ENCODE measurements at regions of chr7 and their contacts with region 1.

Region 1: DNA sequence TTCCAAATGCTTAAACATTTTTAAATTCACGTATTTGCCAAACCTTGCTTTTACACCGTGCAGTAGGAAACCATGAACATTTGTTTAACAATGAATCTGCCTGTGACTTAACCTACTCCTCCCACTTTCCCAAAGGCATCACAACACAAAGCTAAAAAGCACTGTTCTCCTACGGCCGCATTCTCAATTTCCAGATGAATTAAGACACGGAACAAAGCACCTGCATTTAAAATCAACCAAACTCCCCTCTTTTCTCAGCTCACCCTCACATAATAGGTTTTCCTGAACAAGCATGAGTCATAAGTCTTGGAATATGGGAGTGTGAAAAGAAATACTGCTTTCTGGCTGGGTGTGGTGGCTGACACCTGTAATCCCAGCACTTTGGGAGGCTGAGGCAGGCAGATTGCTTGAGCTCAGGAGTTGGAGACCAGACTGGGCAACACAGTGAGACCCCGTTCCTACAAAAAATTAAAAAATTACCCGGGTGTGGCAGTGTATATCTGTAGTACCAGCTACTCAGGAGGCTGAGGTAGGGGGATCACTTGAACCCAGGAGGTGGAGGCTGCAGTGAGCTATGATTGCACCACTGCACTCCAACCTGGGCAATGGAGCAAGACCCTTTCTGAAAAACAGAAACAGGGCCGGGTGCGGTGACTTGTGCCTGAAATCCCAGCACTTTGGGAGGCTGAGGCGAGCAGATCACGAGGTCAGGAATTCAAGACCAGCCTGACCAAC is 51.7 kb upstream of the CYTH3 start:
- DNase-seq: no peak
- ATAC-seq: no peak
- H3K4me3 Mint-ChIP-seq: no peak overlapping the region
- H3K27ac Mint-ChIP-seq: no peak overlapping the region
- H3K4me1 Mint-ChIP-seq: no peaks in the 10 kb centered on the region
- H3K27me3 Mint-ChIP-seq: no peaks in the 10 kb centered on the region
- CTCF ChIP-seq: no peak

Region 2: DNA sequence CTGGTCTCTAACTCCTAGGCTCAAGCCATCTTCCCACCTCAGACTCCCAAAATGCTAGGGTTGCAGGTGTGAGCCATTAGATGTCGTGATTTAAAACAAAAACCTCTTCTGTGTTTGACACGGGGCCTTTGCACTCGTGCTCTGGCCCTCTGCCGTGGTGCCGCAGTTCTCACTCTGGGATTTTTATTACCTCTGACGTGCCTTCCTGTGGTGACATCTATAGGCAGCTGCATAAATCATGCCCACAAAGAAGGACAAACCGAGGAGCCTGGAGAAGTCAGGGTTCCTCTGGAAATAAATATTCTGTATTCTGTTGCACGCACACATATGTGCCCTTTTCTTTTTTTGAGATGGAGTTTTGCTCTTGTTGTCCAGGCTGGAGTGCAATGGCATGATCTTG is 469.4 kb before region 1 on chr7:
- CTCF ChIA-PET with region 1: interaction called, 12 read pairs
- POLR2A ChIA-PET with region 1: no interaction called
- intact Hi-C with region 1: no loop called
- DNase-seq: no peak
- ATAC-seq: no peak
- H3K4me3 Mint-ChIP-seq: no peak overlapping the region
- H3K27ac Mint-ChIP-seq: no peak overlapping the region
- H3K4me1 Mint-ChIP-seq: peaks cover 11% of the 10 kb centered on the region
- H3K27me3 Mint-ChIP-seq: no peaks in the 10 kb centered on the region
- CTCF ChIP-seq: no peak

Region 3: GRCh38 chr7:6139189-6139996 is 184.7 kb before region 1 on chr7:
- CTCF ChIA-PET with region 1: interaction called, 10 read pairs
- POLR2A ChIA-PET with region 1: no interaction called
- intact Hi-C with region 1: no loop called
- DNase-seq: no peak
- ATAC-seq: no peak
- H3K4me3 Mint-ChIP-seq: no peak overlapping the region
- H3K27ac Mint-ChIP-seq: no peak overlapping the region
- H3K4me1 Mint-ChIP-seq: no peaks in the 10 kb centered on the region
- H3K27me3 Mint-ChIP-seq: no peaks in the 10 kb centered on the region
- CTCF ChIP-seq: no peak

Region 4: DNA sequence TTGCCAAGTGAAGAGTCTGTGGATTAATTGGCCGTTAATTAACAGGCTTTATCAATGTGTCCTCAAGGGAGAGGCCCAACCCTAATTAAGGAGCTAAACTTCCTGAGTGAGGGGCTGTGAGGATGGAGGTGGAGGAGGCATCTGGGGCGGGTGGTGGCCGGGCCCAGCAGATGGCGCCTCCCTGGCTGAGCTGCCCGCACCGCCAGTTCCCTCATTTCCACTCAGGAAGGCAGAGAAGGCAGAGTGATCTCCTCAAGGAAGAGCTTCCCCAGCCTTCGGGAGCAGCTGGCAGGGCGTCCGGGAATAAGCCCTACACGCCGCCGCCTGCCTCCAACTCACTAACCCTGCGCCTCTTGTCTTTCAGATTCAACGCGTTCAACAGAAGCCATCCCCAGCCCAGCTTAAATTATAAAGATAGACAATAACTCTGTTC is 163.9 kb before region 1 on chr7:
- CTCF ChIA-PET with region 1: interaction called, 8 read pairs
- POLR2A ChIA-PET with region 1: no interaction called
- intact Hi-C with region 1: loop called (anchors 10 kb)
- DNase-seq: no peak
- ATAC-seq: no peak
- H3K4me3 Mint-ChIP-seq: no peak overlapping the region
- H3K27ac Mint-ChIP-seq: no peak overlapping the region
- H3K4me1 Mint-ChIP-seq: no peaks in the 10 kb centered on the region
- H3K27me3 Mint-ChIP-seq: no peaks in the 10 kb centered on the region
- CTCF ChIP-seq: peak; percentile 16

Region 5: DNA sequence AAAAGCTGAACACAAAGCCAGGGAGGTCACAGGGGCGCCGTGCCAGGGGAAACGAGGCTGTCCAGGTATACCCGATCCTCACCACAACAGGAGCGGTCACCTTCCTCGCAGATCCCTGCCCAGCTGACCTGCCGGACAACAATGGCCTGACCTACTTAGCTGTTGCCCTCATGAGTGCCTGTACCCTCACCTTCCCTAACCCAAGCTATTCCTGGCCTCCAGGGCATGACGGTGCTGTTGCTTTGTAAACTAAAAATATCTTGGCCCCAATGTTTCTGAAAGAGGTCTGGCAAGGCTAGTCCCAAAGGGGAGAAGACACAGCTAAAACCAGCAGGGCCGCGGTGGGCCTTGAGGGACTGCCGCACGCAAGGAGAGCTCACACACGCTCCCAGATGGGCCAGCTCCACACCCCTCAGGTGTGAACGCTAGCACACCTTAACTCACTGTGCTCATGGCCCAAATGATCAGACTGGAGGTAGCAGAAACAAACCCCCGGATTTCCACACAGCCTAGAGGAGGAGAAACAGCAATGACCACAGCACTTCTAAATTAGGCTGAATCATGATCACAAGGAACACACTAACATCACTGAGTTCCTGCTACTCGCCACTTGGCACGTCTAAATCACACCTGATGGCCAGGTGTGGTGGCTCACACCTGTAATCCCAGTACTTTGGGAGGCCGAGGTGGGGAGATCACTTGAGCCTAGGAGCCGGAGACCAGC is 14.6 kb after region 1 on chr7:
- CTCF ChIA-PET with region 1: interaction called, 20 read pairs
- POLR2A ChIA-PET with region 1: no interaction called
- intact Hi-C with region 1: no loop called
- DNase-seq: no peak
- ATAC-seq: no peak
- H3K4me3 Mint-ChIP-seq: no peak overlapping the region
- H3K27ac Mint-ChIP-seq: no peak overlapping the region
- H3K4me1 Mint-ChIP-seq: peaks cover 13% of the 10 kb centered on the region
- H3K27me3 Mint-ChIP-seq: no peaks in the 10 kb centered on the region
- CTCF ChIP-seq: no peak